ENCODE measurements at regions of chr4 and their contacts with region 1.

Region 1: DNA sequence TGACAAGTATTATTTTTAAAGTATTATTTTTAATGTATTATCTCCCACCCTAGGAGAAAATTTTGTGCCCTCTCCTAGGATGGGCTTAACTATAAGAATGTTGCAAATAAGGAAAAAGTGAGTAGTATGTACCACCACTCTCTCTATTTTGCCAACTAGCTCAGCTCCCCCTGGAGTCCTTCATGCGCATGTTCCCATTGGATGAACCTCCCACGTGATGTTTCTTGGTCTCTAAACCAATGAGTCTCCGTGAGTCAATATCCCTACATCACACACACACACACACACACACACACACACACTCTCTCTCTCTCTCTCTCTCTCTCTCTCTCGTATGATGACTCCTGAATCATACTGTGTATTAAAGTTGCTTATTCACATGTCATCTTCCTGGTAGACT is 129.7 kb upstream of the ZFP42 start:
- DNase-seq: no peak
- ATAC-seq: no peak
- H3K4me3 Mint-ChIP-seq: no peak overlapping the region
- H3K27ac Mint-ChIP-seq: no peak overlapping the region
- H3K4me1 Mint-ChIP-seq: no peaks in the 10 kb centered on the region
- H3K27me3 Mint-ChIP-seq: no peaks in the 10 kb centered on the region
- CTCF ChIP-seq: no peak

Region 2: DNA sequence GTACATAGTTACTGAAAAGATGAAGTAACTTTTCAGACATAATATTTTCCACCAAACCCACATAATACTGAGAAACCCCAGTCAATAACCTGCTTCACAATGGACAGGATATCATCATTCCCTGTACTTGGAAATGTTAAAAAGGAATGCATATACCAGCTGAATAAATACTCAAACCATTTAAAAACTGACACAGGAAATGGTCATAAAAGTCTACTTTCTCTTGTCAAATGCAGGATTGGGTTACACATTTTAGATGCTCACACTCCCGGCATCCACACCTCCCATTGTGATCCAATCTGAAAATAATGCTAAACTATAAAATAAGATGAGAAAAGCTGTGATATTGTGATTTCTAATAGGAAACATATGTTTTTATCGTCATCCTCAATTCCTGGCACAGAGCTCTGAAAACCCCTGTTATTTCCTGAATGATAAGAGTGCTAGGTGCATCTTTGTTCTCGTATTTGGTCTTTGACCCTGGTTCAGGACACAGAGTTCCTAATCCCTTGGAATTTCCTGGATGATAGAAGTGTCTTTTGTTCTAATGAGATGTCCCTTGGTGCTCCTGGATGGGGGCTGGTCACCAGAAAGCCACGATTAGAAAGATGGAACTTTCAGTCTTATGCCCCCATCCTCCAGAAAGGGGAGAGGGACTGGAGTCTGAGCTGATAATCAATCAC is 1094.6 kb after region 1 on chr4:
- CTCF ChIA-PET with region 1: no interaction called
- POLR2A ChIA-PET with region 1: no interaction called
- intact Hi-C with region 1: loop called (anchors 5 kb)
- DNase-seq: no peak
- ATAC-seq: no peak
- H3K4me3 Mint-ChIP-seq: no peak overlapping the region
- H3K27ac Mint-ChIP-seq: no peak overlapping the region
- H3K4me1 Mint-ChIP-seq: no peaks in the 10 kb centered on the region
- H3K27me3 Mint-ChIP-seq: no peaks in the 10 kb centered on the region
- CTCF ChIP-seq: no peak

Measured in activated B cell treated with CpG ODN at 0.5 μM for 24 hours (primary cell).